ENCODE measurements at regions of chr2 and their contacts with region 1.

Region 1: GRCh38 chr2:230987137-230988020 is 8.5 kb upstream of the SPATA3 start:
- DNase-seq: peak; percentile 88 to 95
- ATAC-seq: peak; percentile 90
- H3K4me3 ChIP-seq: no peak overlapping the region
- H3K27ac ChIP-seq: no peak overlapping the region
- H3K4me1 ChIP-seq: no peaks in the 10 kb centered on the region
- H3K27me3 ChIP-seq: no peaks in the 10 kb centered on the region

Region 2: GRCh38 chr2:230824406-230824978 is 162.9 kb before region 1 on chr2:
- intact Hi-C with region 1: loop called (anchors 2 kb)
- DNase-seq: no peak
- ATAC-seq: peak; percentile 84
- H3K4me3 ChIP-seq: no peak overlapping the region
- H3K27ac ChIP-seq: no peak overlapping the region
- H3K4me1 ChIP-seq: no peaks in the 10 kb centered on the region
- H3K27me3 ChIP-seq: no peaks in the 10 kb centered on the region

Region 3: GRCh38 chr2:230847883-230848388 is 139.4 kb before region 1 on chr2:
- intact Hi-C with region 1: loop called in 1 of 2 experiments (anchors 5 kb)
- DNase-seq: peak; percentile 93 to 97
- ATAC-seq: peak; percentile 90
- H3K4me3 ChIP-seq: peak overlapping the region in 1 of 2 donors; percentile 4
- H3K27ac ChIP-seq: no peak overlapping the region
- H3K4me1 ChIP-seq: no peaks in the 10 kb centered on the region
- H3K27me3 ChIP-seq: no peaks in the 10 kb centered on the region

Region 4: GRCh38 chr2:230902180-230902899 is 85.0 kb before region 1 on chr2:
- intact Hi-C with region 1: loop called in 1 of 2 experiments (anchors 10 kb)
- DNase-seq: peak in 1 of 2 donors; percentile 64
- ATAC-seq: no peak
- H3K4me3 ChIP-seq: no peak overlapping the region
- H3K27ac ChIP-seq: no peak overlapping the region
- H3K4me1 ChIP-seq: no peaks in the 10 kb centered on the region
- H3K27me3 ChIP-seq: no peaks in the 10 kb centered on the region

Region 5: DNA sequence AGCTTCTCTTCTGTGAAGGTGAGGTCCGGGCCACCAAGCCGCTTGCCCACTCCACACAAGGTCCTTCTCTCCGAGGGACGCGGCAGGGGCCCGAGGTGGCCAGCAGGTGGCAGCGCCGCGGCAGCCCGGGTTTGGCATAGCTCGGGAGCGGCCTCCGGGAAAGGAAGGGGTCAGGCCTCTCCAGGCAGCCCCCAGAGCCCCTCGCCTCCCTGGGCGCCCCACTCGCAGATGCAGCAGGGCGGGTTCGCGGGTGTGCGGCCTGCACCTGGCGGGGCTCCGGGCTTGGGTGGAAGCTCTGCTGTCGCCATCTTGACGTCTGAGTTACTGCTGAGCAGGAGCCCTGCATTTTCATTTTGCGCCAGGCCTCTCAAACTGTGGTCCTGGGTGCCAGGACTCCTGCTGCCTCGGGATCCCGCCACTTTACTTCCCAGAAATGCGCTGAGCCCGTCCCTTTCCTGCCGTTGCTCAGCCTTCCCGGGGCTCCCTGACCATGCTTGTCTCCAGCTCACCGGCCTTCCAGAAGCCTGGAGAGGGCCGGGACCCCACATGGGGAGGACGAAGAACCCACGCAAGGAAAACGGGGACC is 495.5 kb after region 1 on chr2:
- intact Hi-C with region 1: no loop called
- DNase-seq: peak; percentile 85 to 94
- ATAC-seq: peak; percentile 92
- H3K4me3 ChIP-seq: peak overlapping the region; percentile 9 to 24
- H3K27ac ChIP-seq: peak overlapping the region; percentile 24 to 29
- H3K4me1 ChIP-seq: no peaks in the 10 kb centered on the region
- H3K27me3 ChIP-seq: no peaks in the 10 kb centered on the region

Measured in aorta (tissue), 5 donors.